Activated naive CD4-positive, alpha-beta T cell treated with anti-CD3 and anti-CD28 coated beads for 36 hours (primary cell): ENCODE measurements at regions of chr13 and their contacts with region 1.

Region 1: DNA sequence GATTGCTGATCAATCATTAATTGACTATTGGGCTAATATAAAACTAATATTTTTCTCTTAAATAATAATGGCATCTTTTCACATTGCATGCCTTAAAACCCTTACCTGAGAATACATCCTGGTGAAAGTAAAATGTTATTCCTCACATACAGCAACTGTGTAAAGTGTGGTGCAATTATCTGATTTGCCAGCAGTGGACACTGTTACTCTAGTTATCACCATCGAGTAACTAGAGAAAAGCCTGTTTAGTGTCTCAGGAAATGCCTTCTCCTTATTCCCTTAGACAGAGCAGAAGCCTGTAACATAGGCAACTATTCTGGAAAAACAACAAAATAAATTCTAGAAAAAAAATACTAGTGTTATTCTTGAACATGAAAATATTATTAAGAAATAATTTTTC is 459.8 kb downstream of the FGF14 start:
- DNase-seq: peak; percentile 26
- H3K4me3 Mint-ChIP-seq: no peak overlapping the region
- H3K27ac Mint-ChIP-seq: no peak overlapping the region
- H3K4me1 Mint-ChIP-seq: no peaks in the 10 kb centered on the region
- H3K27me3 Mint-ChIP-seq: peaks cover 2% of the 10 kb centered on the region

Region 2: DNA sequence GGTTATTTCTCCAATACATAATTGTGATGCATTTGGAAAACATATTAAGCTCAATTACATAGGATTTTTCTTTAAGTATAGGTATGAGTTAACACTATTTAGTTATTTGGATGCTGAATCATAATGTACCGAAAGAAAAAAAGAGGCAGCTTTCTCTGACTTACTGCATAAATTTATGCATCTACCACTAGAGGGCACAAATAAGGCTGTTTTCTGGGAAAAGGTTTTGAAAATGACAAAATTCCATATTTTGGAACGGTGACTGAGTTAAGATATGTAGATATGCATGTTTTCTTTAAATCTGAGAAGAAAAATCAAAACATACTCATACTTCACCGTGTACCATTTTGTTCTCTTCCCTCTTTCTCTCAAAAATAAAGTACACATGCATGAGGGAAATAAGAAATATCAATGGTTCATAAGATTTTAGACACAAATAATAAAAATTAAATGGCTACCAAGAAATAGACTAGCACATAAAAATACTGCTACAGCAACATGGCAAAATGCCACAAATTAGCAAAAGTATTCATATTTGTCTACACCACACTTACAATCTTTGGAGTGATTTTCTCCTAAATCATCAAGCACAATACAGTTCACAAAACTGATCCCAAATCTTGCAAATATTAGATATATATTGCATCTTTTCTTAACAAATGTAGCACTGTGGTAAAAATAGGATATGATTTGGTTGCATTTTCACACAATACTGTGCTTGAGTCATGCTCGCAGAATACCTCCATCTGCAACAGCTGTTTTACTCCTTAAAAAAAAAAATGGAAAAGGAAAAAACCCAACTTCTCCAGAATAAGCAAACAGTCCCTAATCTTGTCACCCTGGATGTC is 199.8 kb after region 1 on chr13:
- CTCF ChIA-PET with region 1: no interaction called
- intact Hi-C with region 1: loop called (anchors 2 kb)
- DNase-seq: no peak
- H3K4me3 Mint-ChIP-seq: no peak overlapping the region
- H3K27ac Mint-ChIP-seq: no peak overlapping the region
- H3K4me1 Mint-ChIP-seq: no peaks in the 10 kb centered on the region
- H3K27me3 Mint-ChIP-seq: no peaks in the 10 kb centered on the region